MCF 10A (cell line): ENCODE measurements at regions of chr9 and their contacts with region 1.

Region 1: GRCh38 chr9:80285326-80285725 is 713.6 kb downstream of the TLE4 start:
- DNase-seq: peak; percentile 54
- H3K4me3 Mint-ChIP-seq: no peak overlapping the region
- H3K27ac Mint-ChIP-seq: no peak overlapping the region
- H3K4me1 Mint-ChIP-seq: no peaks in the 10 kb centered on the region
- H3K27me3 Mint-ChIP-seq: no peaks in the 10 kb centered on the region
- CTCF ChIP-seq: no peak

Region 2: DNA sequence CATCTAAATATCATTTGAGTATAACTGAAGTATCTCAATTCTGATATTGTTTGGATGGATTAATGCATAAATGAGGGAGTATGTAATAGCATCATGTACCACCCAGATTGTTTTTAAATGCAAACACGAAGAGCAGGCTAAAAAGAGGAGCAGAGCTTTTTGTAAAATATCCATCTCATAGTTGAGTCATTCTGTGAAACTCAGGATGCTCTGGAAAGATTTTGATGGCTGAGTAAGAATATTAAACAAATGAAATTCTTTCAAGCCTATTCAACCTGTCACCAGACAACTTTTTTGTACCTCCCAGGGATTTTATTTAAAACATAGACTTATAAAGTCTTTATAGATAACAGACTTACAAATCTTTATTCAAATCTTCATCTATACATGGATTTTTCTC is 87.7 kb before region 1 on chr9:
- CTCF ChIA-PET with region 1: no interaction called
- POLR2A ChIA-PET with region 1: no interaction called
- intact Hi-C with region 1: no loop called
- DNase-seq: no peak
- H3K4me3 Mint-ChIP-seq: no peak overlapping the region
- H3K27ac Mint-ChIP-seq: no peak overlapping the region
- H3K4me1 Mint-ChIP-seq: no peaks in the 10 kb centered on the region
- H3K27me3 Mint-ChIP-seq: no peaks in the 10 kb centered on the region
- CTCF ChIP-seq: no peak

Region 3: DNA sequence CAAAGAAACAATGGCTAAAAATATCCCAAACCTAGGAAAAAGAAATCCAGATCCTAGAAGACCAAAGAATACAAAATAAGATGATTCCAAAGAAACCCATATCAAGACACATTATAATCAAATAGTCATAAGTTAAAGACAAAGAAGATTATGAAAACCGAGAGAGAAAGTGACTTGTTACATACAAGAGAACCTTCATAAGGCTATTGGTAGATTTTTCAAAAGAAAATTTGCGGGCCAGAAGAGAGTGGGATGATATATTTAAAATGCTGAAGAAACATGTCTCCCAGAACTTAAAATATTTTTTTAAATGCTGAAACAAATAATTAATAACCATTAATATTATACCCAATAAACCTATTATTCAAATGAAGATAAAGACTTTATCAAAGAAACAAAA is 26.2 kb before region 1 on chr9:
- CTCF ChIA-PET with region 1: no interaction called
- POLR2A ChIA-PET with region 1: no interaction called
- intact Hi-C with region 1: no loop called
- DNase-seq: no peak
- H3K4me3 Mint-ChIP-seq: no peak overlapping the region
- H3K27ac Mint-ChIP-seq: no peak overlapping the region
- H3K4me1 Mint-ChIP-seq: no peaks in the 10 kb centered on the region
- H3K27me3 Mint-ChIP-seq: no peaks in the 10 kb centered on the region
- CTCF ChIP-seq: no peak

Region 4: DNA sequence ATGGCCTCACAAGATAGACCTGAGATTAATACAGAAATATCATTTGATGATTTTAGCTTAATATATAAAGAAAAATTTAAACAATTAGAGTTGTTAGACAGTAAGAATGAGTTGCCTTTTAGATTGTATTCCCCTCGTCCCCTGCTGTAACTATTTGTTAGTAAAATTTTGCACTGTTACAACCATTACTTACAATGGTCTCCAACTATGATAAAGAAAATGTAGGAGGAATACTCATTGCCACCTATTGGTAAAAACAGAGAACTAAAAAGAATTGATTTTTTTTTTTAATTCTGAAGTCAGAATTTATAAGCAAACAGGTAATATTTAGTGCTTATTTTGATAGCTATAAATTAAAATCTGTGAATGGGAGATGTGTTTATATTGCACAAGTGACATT is 224.0 kb after region 1 on chr9:
- CTCF ChIA-PET with region 1: no interaction called
- POLR2A ChIA-PET with region 1: no interaction called
- intact Hi-C with region 1: loop called (anchors 1 kb)
- DNase-seq: no peak
- H3K4me3 Mint-ChIP-seq: no peak overlapping the region
- H3K27ac Mint-ChIP-seq: no peak overlapping the region
- H3K4me1 Mint-ChIP-seq: no peaks in the 10 kb centered on the region
- H3K27me3 Mint-ChIP-seq: no peaks in the 10 kb centered on the region
- CTCF ChIP-seq: peak; percentile 28